ENCODE measurements at regions of chr15 and their contacts with region 1.

Region 1: GRCh38 chr15:36501063-36501678 is 78.3 kb upstream of the CDIN1 start:
- DNase-seq: peak in 3 of 4 experiments; percentile 11 to 72 (median 40)
- ATAC-seq: peak; percentile 95
- H3K4me3 ChIP-seq: no peak overlapping the region
- H3K27ac ChIP-seq: no peak overlapping the region
- H3K4me1 ChIP-seq: no peaks in the 10 kb centered on the region
- H3K27me3 ChIP-seq: no peaks in the 10 kb centered on the region
- CTCF ChIP-seq: peak; percentile 60 to 84 (median 71)
- EP300 ChIP-seq: no peak
- POLR2A ChIP-seq: no peak
- RAD21 ChIP-seq: peak; percentile 73 to 87

Region 2: GRCh38 chr15:35519541-35520149 is 981.5 kb before region 1 on chr15:
- CTCF ChIA-PET with region 1: no interaction called
- POLR2A ChIA-PET with region 1: no interaction called
- in situ Hi-C with region 1: no loop called
- intact Hi-C with region 1: loop called (anchors 5 kb)
- DNase-seq: peak in 3 of 4 experiments; percentile 10 to 61 (median 12)
- ATAC-seq: peak; percentile 86
- H3K4me3 ChIP-seq: no peak overlapping the region
- H3K27ac ChIP-seq: no peak overlapping the region
- H3K4me1 ChIP-seq: no peaks in the 10 kb centered on the region
- H3K27me3 ChIP-seq: no peaks in the 10 kb centered on the region
- CTCF ChIP-seq: peak; percentile 28 to 75 (median 40); a peak in 3 of 6 replicates
- EP300 ChIP-seq: no peak
- POLR2A ChIP-seq: no peak
- RAD21 ChIP-seq: peak; percentile 76 to 90

Region 3: DNA sequence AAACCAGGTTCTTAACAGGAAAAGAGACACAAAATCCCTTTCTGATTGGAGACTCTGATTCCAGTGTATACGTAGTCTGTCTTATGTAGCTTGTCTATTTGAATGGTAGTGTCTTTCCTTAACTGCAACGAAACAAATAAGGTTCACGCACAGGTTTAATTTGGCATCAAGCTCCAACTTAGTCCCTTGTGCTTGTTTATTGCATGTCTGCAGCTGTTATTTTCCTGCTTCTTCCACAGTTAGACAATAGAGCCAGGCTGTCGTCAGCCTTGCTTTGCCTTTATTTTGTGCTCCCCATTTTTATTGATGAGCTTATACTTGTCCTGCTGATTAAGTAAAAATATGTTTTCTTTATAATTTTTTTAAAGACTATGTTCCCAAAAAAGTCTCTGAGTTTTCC is 74.5 kb before region 1 on chr15:
- CTCF ChIA-PET with region 1: no interaction called
- POLR2A ChIA-PET with region 1: no interaction called
- in situ Hi-C with region 1: no loop called
- intact Hi-C with region 1: no loop called
- DNase-seq: no peak
- ATAC-seq: no peak
- H3K4me3 ChIP-seq: no peak overlapping the region
- H3K27ac ChIP-seq: peak overlapping the region; percentile 29
- H3K4me1 ChIP-seq: peaks cover 9 to 39% of the 10 kb centered on the region in 2 experiments
- H3K27me3 ChIP-seq: no peaks in the 10 kb centered on the region
- CTCF ChIP-seq: no peak
- EP300 ChIP-seq: no peak
- POLR2A ChIP-seq: no peak
- RAD21 ChIP-seq: no peak

Region 4: DNA sequence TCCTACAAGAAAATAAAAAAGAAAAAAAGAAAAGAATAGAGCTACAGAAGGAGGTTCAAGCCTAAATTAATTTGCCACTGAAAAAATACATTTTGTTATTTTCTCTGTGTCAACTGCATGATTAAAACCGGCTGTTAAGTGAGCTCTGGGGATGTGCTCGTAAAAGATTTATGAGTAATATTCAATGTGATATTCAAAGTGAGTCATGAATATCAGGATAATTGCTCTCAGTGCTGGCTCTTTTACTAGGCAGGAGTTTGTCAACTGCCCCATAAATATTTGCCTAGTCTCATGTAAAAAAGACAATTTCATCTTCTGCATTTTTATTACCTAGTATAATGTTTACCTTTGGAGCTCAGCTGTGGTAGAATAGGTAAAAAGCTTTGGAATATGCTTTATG is 157.1 kb after region 1 on chr15:
- CTCF ChIA-PET with region 1: no interaction called
- POLR2A ChIA-PET with region 1: no interaction called
- in situ Hi-C with region 1: no loop called
- intact Hi-C with region 1: no loop called
- DNase-seq: no peak
- ATAC-seq: no peak
- H3K4me3 ChIP-seq: no peak overlapping the region
- H3K27ac ChIP-seq: no peak overlapping the region
- H3K4me1 ChIP-seq: no peaks in the 10 kb centered on the region
- H3K27me3 ChIP-seq: no peaks in the 10 kb centered on the region
- CTCF ChIP-seq: no peak
- EP300 ChIP-seq: no peak
- POLR2A ChIP-seq: no peak
- RAD21 ChIP-seq: no peak

Region 5: GRCh38 chr15:36883713-36884517 is 382.7 kb after region 1 on chr15:
- CTCF ChIA-PET with region 1: no interaction called
- POLR2A ChIA-PET with region 1: no interaction called
- in situ Hi-C with region 1: no loop called
- intact Hi-C with region 1: loop called (anchors 10 kb)
- DNase-seq: peak; percentile 83 to 90 (median 84)
- ATAC-seq: peak; percentile 96
- H3K4me3 ChIP-seq: no peak overlapping the region
- H3K27ac ChIP-seq: no peak overlapping the region
- H3K4me1 ChIP-seq: peaks cover 3 to 13% of the 10 kb centered on the region in 2 experiments; a peak in 4 of 5 replicates
- H3K27me3 ChIP-seq: peaks cover 3 to 9% of the 10 kb centered on the region in 2 experiments; a peak in 2 of 5 replicates
- CTCF ChIP-seq: peak; percentile 82 to 90 (median 90)
- EP300 ChIP-seq: no peak
- POLR2A ChIP-seq: no peak
- RAD21 ChIP-seq: peak; percentile 91 to 96

Region 6: DNA sequence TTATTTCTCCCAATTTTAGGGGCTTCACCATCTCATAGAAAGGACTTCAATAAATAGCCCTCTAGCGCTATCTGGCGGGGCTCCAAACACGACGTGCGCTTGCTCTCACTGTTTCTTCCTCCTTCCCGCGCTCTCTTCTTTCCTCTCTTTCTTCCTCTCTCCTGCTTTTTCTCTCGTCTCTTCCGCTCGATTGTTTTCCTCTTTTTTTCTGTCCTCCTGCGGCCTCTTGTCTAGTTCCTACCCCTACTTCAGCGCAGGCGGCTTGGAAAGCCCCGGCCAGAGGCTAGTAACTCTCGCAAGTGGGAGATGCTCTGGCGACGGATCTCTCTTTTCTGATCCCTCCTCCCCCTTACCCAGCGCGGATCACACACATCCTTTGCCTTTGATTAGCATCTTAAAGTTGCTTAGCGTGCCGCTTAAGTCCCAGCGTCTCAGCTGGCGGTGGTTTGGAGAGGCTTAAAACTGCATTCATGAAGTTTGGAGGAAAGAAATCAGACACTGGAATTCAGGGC is 605.4 kb after region 1 on chr15:
- CTCF ChIA-PET with region 1: no interaction called
- POLR2A ChIA-PET with region 1: no interaction called
- in situ Hi-C with region 1: no loop called
- intact Hi-C with region 1: loop called (anchors 5 kb)
- DNase-seq: peak in 2 of 4 experiments; percentile 29 to 65
- ATAC-seq: no peak
- H3K4me3 ChIP-seq: no peak overlapping the region
- H3K27ac ChIP-seq: no peak overlapping the region
- H3K4me1 ChIP-seq: peaks cover 7 to 27% of the 10 kb centered on the region in 2 experiments; a peak in 3 of 5 replicates
- H3K27me3 ChIP-seq: no peaks in the 10 kb centered on the region
- CTCF ChIP-seq: peak; percentile 40 to 62 (median 50); a peak in 5 of 6 replicates
- EP300 ChIP-seq: no peak
- POLR2A ChIP-seq: no peak
- RAD21 ChIP-seq: peak; percentile 54 to 72

Region 7: GRCh38 chr15:37134699-37135131 is 633.5 kb after region 1 on chr15:
- CTCF ChIA-PET with region 1: no interaction called
- POLR2A ChIA-PET with region 1: no interaction called
- in situ Hi-C with region 1: no loop called
- intact Hi-C with region 1: loop called (anchors 1 kb)
- DNase-seq: peak; percentile 50 to 78 (median 63)
- ATAC-seq: peak; percentile 92
- H3K4me3 ChIP-seq: no peak overlapping the region
- H3K27ac ChIP-seq: no peak overlapping the region
- H3K4me1 ChIP-seq: no peaks in the 10 kb centered on the region
- H3K27me3 ChIP-seq: no peaks in the 10 kb centered on the region; a peak in 1 of 5 replicates
- CTCF ChIP-seq: peak; percentile 44 to 88 (median 76); a peak in 5 of 6 replicates
- EP300 ChIP-seq: no peak
- POLR2A ChIP-seq: no peak
- RAD21 ChIP-seq: peak; percentile 43 to 56

Region 8: GRCh38 chr15:37880009-37880834 is 1379.1 kb after region 1 on chr15:
- CTCF ChIA-PET with region 1: no interaction called
- POLR2A ChIA-PET with region 1: no interaction called
- in situ Hi-C with region 1: loop called (anchors 25 kb)
- intact Hi-C with region 1: loop called (anchors 10 kb)
- DNase-seq: peak; percentile 14 to 30 (median 22)
- ATAC-seq: peak; percentile 70
- H3K4me3 ChIP-seq: no peak overlapping the region
- H3K27ac ChIP-seq: no peak overlapping the region
- H3K4me1 ChIP-seq: no peaks in the 10 kb centered on the region
- H3K27me3 ChIP-seq: no peaks in the 10 kb centered on the region
- CTCF ChIP-seq: peak; percentile 52 to 58 (median 56)
- EP300 ChIP-seq: no peak
- POLR2A ChIP-seq: no peak
- RAD21 ChIP-seq: peak; percentile 58 to 65

Region 9: GRCh38 chr15:37891766-37892368 is 1390.7 kb after region 1 on chr15:
- CTCF ChIA-PET with region 1: no interaction called
- POLR2A ChIA-PET with region 1: no interaction called
- in situ Hi-C with region 1: loop called (anchors 25 kb)
- intact Hi-C with region 1: loop called (anchors 10 kb)
- DNase-seq: peak in 3 of 4 experiments; percentile 7 to 36 (median 35)
- ATAC-seq: peak; percentile 79
- H3K4me3 ChIP-seq: no peak overlapping the region
- H3K27ac ChIP-seq: no peak overlapping the region
- H3K4me1 ChIP-seq: no peaks in the 10 kb centered on the region
- H3K27me3 ChIP-seq: no peaks in the 10 kb centered on the region
- CTCF ChIP-seq: peak; percentile 46 to 78 (median 77)
- EP300 ChIP-seq: no peak
- POLR2A ChIP-seq: no peak
- RAD21 ChIP-seq: peak; percentile 63 to 68